ENCODE measurements at regions of chr14 and their contacts with region 1.

Region 1: GRCh38 chr14:64952598-64953309 is 10.2 kb upstream of the GPX2 start:
- DNase-seq: no peak

Region 2: GRCh38 chr14:64580467-64580866 is 372.3 kb before region 1 on chr14:
- intact Hi-C with region 1: no loop called
- DNase-seq: no peak

Region 3: DNA sequence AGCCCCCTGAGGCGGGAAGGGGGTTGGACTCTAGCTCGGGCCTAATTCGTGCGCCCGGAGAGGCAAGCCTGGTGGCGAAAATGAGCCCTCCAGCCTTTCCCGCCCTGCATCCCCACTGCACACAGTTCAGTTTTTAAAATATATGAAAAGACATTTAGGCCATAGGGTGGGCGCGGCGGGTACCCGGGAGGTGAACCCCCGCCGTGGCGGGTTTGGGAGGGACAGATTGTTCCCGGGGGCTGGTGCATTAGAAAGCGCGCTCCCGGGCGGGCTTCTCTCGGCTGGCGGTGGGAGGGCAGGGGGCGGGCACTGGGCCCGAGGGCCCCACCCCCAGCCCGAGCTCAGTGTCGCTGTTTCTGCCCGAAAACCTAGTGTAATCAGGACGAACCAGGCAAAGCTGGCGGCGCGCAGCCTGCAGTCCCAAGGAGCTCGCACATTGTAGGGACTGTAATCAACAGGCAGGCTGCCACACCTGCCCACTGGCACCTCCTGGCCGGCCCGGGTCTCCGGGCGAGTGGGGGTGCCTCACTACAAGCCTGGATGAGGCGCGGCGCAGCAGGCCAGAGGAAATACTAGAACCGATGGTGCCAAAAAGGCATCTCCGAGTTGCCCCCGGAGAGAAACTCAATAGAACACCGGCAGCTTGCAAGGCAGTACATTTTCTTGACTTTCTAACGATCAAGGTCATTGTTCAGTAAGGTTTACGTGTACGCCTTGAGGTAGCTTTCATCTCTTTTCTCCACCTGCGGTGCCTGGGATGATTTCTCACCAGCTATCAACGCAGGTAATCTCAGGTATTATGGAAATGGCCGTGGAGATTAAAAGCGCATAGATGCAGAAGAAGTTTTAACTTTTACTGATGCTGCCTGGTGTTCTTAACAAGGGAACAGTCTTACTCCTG is 72.3 kb before region 1 on chr14:
- intact Hi-C with region 1: no loop called
- DNase-seq: peak in 9 of 10 donors; percentile 37 to 94 (median 68)

Region 4: DNA sequence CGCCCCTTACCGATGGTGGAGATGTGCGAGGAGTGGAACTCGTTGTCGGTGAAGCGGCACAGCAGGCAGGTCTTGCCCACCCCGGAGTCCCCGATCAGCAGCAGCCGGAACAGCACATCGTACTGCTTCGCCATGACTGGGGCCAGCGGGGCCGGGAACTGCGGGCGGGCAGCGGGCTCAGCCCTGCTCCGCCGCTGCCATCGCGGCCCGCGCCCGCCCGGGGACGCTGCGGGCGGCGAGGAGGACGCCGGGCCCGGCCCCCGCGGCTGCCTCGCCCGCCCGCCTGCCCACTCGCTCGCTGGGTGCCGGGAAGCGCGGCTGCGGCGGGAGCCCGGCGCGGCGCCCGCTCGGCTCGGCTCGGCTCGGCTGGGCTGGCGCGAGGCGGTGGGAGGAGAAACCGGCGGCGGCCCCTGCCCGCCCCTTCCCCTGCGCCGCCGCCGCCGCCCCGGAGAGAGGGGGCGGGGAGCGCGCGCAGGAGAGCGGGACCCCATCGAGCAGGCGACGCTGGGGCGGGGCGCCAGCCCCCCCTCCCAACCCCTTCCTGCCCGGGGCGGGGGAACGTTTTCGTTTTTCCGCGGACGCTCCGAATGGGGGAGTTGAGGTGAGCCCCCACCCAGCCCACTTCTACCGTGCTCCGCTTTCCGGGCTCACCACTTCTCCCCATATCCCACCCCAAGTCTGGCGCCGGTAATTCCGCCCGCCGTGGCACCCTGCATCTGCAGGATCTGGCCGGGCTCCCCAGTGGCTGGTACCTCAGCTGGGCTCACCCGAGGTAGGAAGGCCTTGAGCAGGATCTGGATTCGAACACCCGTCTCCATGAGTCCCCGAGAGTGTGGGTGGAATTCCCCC is 19.4 kb after region 1 on chr14 and contains the start of gene RAB15:
- intact Hi-C with region 1: loop called (anchors 2 kb)
- DNase-seq: peak in 3 of 10 donors; percentile 28 to 91 (median 46)